Right cardiac atrium (tissue), 5 donors: ENCODE measurements at regions of chr6 and their contacts with region 1.

Region 1: DNA sequence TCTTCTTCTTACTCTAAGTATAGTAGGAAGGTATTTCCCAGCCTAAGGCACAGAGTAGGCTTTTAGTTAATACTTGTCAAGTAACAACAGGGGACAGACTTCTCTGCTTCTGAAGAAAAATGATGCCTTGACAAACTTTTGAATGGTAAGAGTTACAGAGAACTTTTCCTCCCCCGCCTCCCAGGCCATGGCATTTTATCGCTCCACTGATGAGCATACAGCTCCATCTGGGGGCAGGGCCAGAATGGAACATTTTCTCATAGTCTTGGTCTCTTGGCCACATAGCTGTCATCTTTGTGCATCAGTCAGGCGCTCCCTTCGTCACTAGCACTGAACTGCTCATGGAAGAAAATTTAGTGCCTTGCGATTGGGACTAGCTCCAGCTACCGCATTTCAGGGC is 1066.8 kb upstream of the CITED2 start:
- DNase-seq: peak; percentile 52 to 71 (median 67)
- ATAC-seq: peak; percentile 91 to 92
- H3K4me3 ChIP-seq: no peak overlapping the region
- H3K27ac ChIP-seq: peak overlapping the region; percentile 34
- H3K4me1 ChIP-seq: no peaks in the 10 kb centered on the region
- H3K27me3 ChIP-seq: no peaks in the 10 kb centered on the region

Region 2: GRCh38 chr6:138931660-138932059 is 1509.6 kb before region 1 on chr6:
- intact Hi-C with region 1: no loop called
- DNase-seq: no peak
- ATAC-seq: no peak
- H3K4me3 ChIP-seq: no peak overlapping the region
- H3K27ac ChIP-seq: no peak overlapping the region
- H3K4me1 ChIP-seq: no peaks in the 10 kb centered on the region
- H3K27me3 ChIP-seq: no peaks in the 10 kb centered on the region

Region 3: GRCh38 chr6:139881728-139882211 is 559.5 kb before region 1 on chr6:
- intact Hi-C with region 1: loop called in 1 of 4 experiments (anchors 10 kb)
- DNase-seq: no peak
- ATAC-seq: peak; percentile 64 to 68
- H3K4me3 ChIP-seq: no peak overlapping the region
- H3K27ac ChIP-seq: no peak overlapping the region
- H3K4me1 ChIP-seq: peaks cover 2% of the 10 kb centered on the region
- H3K27me3 ChIP-seq: no peaks in the 10 kb centered on the region